ENCODE measurements at regions of chrX and their contacts with region 1.

Region 1: GRCh38 chrX:106481341-106481740 is 130.4 kb upstream of the RADX start:
- DNase-seq: no peak
- ATAC-seq: peak; percentile 85 to 98 (median 90)
- H3K4me3 ChIP-seq: no peak overlapping the region
- H3K27ac ChIP-seq: no peak overlapping the region
- H3K4me1 ChIP-seq: no peaks in the 10 kb centered on the region
- H3K27me3 ChIP-seq: no peaks in the 10 kb centered on the region
- CTCF ChIP-seq: peak; percentile 89

Region 2: DNA sequence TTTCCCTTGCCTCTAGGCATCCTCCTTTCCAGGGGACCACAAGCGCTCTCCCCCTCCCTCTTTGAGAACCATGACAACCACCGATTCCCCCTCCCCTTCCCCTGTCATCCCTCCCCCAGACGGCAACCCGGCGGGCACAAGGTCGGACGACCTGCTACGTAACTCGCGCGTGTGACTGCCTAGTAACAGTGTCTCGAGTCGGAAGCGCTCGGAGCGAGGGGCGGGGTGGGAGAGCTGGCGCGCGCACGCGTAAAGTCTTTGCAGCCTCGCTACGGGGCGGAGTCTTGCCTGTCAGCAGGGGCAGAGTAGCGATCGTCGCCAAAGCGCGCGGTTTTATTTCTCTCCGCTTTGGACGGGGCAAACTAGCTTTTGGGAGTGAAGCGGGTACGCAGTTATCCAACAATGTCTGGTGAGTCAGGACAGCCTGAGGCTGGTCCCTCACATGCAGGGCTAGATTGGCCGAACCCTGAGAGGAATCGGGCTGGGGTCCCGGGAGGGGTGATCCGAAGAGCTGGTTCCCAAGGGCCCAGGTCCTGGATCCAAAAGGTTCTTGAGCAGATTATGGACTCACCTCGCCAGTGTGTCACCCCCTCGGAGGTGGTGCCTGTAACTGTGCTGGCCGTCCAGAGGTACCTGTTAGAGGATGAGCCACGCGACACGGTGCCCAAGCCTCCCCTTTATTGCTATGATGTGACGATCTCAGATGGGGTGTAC is 130.5 kb after region 1 on chrX and contains the start of gene RADX:
- intact Hi-C with region 1: loop called (anchors 5 to 10 kb)
- DNase-seq: peak; percentile 75 to 89
- ATAC-seq: peak; percentile 88 to 99 (median 98)
- H3K4me3 ChIP-seq: peak within 1 kb of the TSS; percentile 67
- H3K27ac ChIP-seq: no peak within 1 kb of the TSS
- H3K4me1 ChIP-seq: no peaks in the 10 kb centered on the region
- H3K27me3 ChIP-seq: peaks cover 0 to 11% (median 0%) of the 10 kb centered on the region in 3 donors
- CTCF ChIP-seq: no peak
- total RNA-seq, gene RADX: 1.0 to 2.8 (median 1.4) TPM

Region 3: GRCh38 chrX:106791495-106791894 is 310.2 kb after region 1 on chrX:
- intact Hi-C with region 1: loop called (anchors 5 to 10 kb)
- DNase-seq: no peak
- ATAC-seq: no peak
- H3K4me3 ChIP-seq: no peak overlapping the region
- H3K27ac ChIP-seq: no peak overlapping the region
- H3K4me1 ChIP-seq: no peaks in the 10 kb centered on the region
- H3K27me3 ChIP-seq: peaks cover 0 to under 1% (median 0%) of the 10 kb centered on the region in 3 donors
- CTCF ChIP-seq: peak; percentile 42

Measured in psoas muscle (tissue), 8 donors.